ENCODE measurements at regions of chr16 and their contacts with region 1.

Region 1: GRCh38 chr16:70737377-70738082 is 51.7 kb upstream of the MTSS2 start:
- DNase-seq: peak; percentile 83
- H3K4me3 Mint-ChIP-seq: peak overlapping the region; percentile 79
- H3K27ac Mint-ChIP-seq: peak overlapping the region; percentile 98
- H3K4me1 Mint-ChIP-seq: peaks cover 53% of the 10 kb centered on the region
- H3K27me3 Mint-ChIP-seq: no peaks in the 10 kb centered on the region

Region 2: GRCh38 chr16:70402916-70403659 is 334.4 kb before region 1 on chr16:
- intact Hi-C with region 1: loop called (anchors 10 kb)
- DNase-seq: no peak
- H3K4me3 Mint-ChIP-seq: peak overlapping the region; percentile 10
- H3K27ac Mint-ChIP-seq: peak overlapping the region; percentile 92
- H3K4me1 Mint-ChIP-seq: peaks cover 43% of the 10 kb centered on the region
- H3K27me3 Mint-ChIP-seq: no peaks in the 10 kb centered on the region

Region 3: GRCh38 chr16:70685938-70686375 is 51.6 kb before region 1 on chr16 and contains the start of gene MTSS2:
- intact Hi-C with region 1: loop called (anchors 2 kb)
- DNase-seq: no peak
- H3K4me3 Mint-ChIP-seq: no peak within 1 kb of the TSS
- H3K27ac Mint-ChIP-seq: no peak within 1 kb of the TSS
- H3K4me1 Mint-ChIP-seq: no peaks in the 10 kb centered on the region
- H3K27me3 Mint-ChIP-seq: peaks cover 25% of the 10 kb centered on the region
- total RNA-seq, gene MTSS2: 2.0 and 3.5 TPM in 2 replicates

Region 4: GRCh38 chr16:70770626-70771552 is 33.4 kb after region 1 on chr16:
- intact Hi-C with region 1: loop called (anchors 1 kb)
- DNase-seq: peak; percentile 45
- H3K4me3 Mint-ChIP-seq: no peak overlapping the region
- H3K27ac Mint-ChIP-seq: no peak overlapping the region
- H3K4me1 Mint-ChIP-seq: peaks cover 9% of the 10 kb centered on the region
- H3K27me3 Mint-ChIP-seq: no peaks in the 10 kb centered on the region

Region 5: GRCh38 chr16:70800781-70801530 is 63.4 kb after region 1 on chr16 and contains the start of gene VAC14:
- intact Hi-C with region 1: loop called (anchors 1 kb)
- DNase-seq: peak; percentile 93
- H3K4me3 Mint-ChIP-seq: peak within 1 kb of the TSS; percentile 97
- H3K27ac Mint-ChIP-seq: peak within 1 kb of the TSS; percentile 89
- H3K4me1 Mint-ChIP-seq: peaks cover 27% of the 10 kb centered on the region
- H3K27me3 Mint-ChIP-seq: peaks cover 11% of the 10 kb centered on the region
- total RNA-seq, gene VAC14: 36.6 and 37.5 TPM in 2 replicates

Measured in activated T-helper 1 cell treated with anti-CD3 and anti-CD28 coated beads, Interleukin-12 subunit alpha, Interleukin-12 subunit beta, Interleukin-2, Interleukin-4 antibody, amounts not matched to agents 30 ng/mL and 10 ng/mL and 1 ng/mL, durations not matched to agents 14 hours and 24 hours and 36 hours (primary cell).